Breast epithelium (tissue), 4 donors: ENCODE measurements at regions of chr7 and their contacts with region 1.

Region 1: DNA sequence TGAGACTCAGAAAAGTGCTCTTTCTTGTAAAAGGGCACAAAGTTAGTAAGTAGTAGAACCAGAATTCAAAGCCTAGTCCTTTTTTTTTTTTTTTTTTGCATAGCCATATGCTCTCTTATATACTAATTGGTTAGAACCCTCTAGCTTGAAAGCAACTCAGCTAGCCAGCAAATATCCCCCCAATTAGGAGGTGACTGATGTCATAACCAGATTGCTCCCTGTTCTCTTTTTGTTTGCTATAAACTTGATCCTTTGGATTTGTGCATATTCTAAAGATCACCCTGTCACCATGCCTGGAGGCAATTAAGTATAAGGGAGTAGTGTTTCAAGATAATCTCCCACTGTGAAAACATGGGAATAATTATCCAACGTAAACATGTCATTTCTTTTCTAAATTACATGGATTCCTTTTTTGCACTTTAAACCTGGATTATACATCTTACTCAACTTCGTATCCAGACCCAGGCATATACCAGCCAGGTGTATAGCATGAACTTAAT is 963.4 kb downstream of the CNTNAP2 start:
- DNase-seq: no peak
- H3K4me3 ChIP-seq: no peak overlapping the region
- H3K27ac ChIP-seq: no peak overlapping the region
- H3K4me1 ChIP-seq: no peaks in the 10 kb centered on the region
- H3K27me3 ChIP-seq: no peaks in the 10 kb centered on the region
- CTCF ChIP-seq: no peak
- POLR2A ChIP-seq: no peak

Region 2: GRCh38 chr7:148645898-148646297 is 1565.9 kb after region 1 on chr7:
- intact Hi-C with region 1: loop called (anchors 10 kb)
- DNase-seq: no peak
- H3K4me3 ChIP-seq: no peak overlapping the region
- H3K27ac ChIP-seq: no peak overlapping the region
- H3K4me1 ChIP-seq: no peaks in the 10 kb centered on the region
- H3K27me3 ChIP-seq: peaks cover 0 to 4% of the 10 kb centered on the region in 2 donors
- CTCF ChIP-seq: no peak
- POLR2A ChIP-seq: no peak